Thyroid gland (tissue), 4 donors: ENCODE measurements at regions of chr9 and their contacts with region 1.

Region 1: DNA sequence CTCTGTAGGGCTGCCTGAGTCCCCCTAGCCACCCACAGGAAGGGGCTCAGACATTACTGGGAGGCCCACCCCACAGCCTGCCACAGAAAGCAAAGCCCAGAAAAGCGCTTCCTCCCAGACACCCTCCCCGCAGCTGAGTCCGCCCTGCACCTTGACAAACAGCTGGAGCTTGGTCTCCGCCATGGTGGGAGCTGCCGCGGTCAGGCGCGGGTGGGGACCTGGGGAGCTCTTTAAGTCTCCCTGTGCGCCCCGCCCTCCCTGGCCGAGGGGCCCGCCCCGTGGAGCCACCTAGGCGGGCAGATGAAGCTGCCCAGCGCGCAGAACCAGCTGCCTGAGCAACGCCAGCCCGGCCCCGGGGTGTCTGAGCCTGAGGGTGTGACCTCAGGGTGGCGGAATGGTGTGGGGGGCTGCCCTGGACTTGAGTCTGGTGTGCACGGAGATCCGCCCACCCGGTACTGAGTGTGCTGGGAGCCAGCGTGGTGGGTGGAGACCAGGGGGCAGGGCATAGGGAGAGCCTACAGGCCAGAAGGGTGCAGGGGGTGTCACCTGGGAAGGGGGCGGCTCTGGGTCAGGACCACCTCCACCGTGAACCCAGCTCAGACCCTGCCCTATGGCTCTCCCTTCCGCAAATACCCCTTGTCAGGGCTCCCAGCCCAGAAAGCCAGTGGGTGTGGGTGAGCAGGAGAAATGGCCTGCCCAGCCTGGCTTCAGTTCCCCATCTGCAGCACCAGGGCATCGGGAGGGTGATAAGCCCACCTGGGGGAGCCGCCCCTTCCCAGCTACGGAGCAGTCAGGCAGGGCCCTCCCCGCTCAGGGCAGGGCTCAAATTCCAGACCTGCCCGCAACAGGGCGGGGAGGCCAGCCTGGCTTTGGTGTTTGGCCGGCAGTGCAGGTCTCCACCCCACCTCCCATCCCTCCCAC is at the start of gene CLIC3:
- DNase-seq: peak; percentile 90 to 92
- H3K4me3 ChIP-seq: peak within 1 kb of the TSS; percentile 12 to 37 (median 14)
- H3K27ac ChIP-seq: peak within 1 kb of the TSS; percentile 53 to 78 (median 69)
- H3K4me1 ChIP-seq: peaks cover 46 to 69% of the 10 kb centered on the region in 2 donors
- H3K27me3 ChIP-seq: no peaks in the 10 kb centered on the region
- CTCF ChIP-seq: peak in 1 of 6 experiments; percentile 11
- POLR2A ChIP-seq: peak; percentile 11 to 63
- total RNA-seq, gene CLIC3: 97.7 to 301 (median 268) TPM

Region 2: DNA sequence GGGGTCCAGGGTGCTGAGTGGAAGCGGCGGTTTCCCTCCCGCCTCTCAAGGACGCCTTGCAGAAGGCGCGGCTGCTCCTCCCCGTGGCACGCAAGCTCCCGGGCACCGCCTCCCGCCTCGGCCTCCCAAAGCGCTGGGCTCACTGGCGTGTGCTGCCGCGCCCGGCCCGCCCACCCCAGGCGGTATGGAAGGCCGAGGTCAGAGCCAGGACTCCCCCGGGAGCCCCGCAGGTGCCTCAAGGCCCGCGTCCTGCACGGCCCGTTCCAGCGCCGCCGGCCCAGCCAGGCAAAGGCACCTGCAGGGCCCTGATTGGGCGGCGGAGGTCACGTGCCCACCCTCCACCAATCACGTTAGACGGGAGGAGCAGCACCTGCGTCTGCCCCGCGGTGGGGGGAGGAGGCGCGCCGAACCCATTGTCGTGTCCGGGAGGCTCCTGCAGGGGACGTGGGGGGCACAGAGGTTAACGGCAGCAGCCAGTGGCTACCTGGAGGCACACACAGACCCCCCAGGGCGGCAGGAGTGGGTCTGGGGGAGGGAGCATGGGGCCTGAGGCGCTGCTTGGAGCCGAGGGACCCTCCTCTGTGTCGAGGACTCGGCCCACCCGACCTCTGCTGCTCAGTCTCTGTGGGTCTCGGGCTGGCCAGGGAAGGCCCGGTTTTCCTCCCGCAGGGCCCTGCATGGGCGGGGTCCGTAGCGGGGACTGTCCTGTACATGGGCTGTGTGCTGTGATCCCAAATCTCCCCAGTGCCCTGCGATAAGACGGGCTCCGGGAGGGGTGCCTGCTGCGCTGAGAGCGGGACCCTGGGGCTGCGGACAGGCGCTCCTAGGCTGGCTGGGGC is 46.6 kb before region 1 on chr9:
- intact Hi-C with region 1: loop called (anchors 5 kb)
- DNase-seq: peak; percentile 99
- H3K4me3 ChIP-seq: peak overlapping the region in 2 of 3 donors; percentile 38 to 53
- H3K27ac ChIP-seq: peak overlapping the region; percentile 78 to 96 (median 95)
- H3K4me1 ChIP-seq: peaks cover 57 to 80% of the 10 kb centered on the region in 2 donors
- H3K27me3 ChIP-seq: no peaks in the 10 kb centered on the region
- CTCF ChIP-seq: peak in 4 of 6 experiments; percentile 28 to 48 (median 39)
- POLR2A ChIP-seq: peak in 1 of 2 donors; percentile 98